B cell (primary cell): ENCODE measurements at regions of chr5 and their contacts with region 1.

Region 1: DNA sequence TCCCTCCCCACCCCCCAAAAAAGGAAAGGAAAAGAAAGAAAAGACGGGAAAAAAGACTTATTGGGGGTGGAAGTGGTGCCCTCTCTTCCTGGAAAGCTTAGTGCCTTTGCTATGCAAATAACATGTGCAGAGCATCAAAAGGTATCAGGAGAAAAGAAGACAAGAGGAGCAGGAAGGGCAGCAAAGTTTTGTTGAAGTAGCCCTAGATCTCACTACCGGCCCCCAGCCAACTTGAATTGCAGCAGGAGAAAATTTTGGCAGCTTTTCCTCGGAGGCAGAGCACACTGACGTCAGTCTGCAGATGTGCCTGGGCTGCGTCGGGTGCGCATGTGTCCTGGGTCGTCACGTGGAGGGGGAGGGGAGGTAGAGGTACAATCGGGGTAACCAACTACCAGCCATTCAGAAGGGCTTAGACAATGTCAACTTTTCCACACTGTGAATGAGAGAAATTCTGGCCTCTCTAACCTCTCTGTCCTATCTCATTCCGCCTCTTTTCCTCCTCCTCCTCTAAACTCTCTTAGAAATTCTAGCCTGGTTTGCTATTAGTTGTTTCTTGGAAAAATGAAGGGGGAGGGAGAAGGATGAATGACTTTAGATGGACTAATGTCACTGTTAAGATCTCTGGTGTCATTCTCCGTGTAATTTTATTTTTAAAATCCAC is at the start of gene ADAMTS6:
- DNase-seq: peak; percentile 85
- ATAC-seq: peak; percentile 87
- H3K4me3 ChIP-seq: peak within 1 kb of the TSS; percentile 69 to 99 (median 74)
- H3K4me3 Mint-ChIP-seq: no peak within 1 kb of the TSS
- H3K27ac ChIP-seq: peak within 1 kb of the TSS; percentile 55 to 81
- H3K27ac Mint-ChIP-seq: peak within 1 kb of the TSS; percentile 90
- H3K4me1 ChIP-seq: peaks cover 0 to 12% of the 10 kb centered on the region in 2 donors
- H3K4me1 Mint-ChIP-seq: peaks cover 7% of the 10 kb centered on the region
- H3K27me3 ChIP-seq: no peaks in the 10 kb centered on the region
- H3K27me3 Mint-ChIP-seq: no peaks in the 10 kb centered on the region
- CTCF ChIP-seq: no peak
- total RNA-seq, gene ADAMTS6: 11.9 and 12.3 TPM in 2 replicates

Region 2: DNA sequence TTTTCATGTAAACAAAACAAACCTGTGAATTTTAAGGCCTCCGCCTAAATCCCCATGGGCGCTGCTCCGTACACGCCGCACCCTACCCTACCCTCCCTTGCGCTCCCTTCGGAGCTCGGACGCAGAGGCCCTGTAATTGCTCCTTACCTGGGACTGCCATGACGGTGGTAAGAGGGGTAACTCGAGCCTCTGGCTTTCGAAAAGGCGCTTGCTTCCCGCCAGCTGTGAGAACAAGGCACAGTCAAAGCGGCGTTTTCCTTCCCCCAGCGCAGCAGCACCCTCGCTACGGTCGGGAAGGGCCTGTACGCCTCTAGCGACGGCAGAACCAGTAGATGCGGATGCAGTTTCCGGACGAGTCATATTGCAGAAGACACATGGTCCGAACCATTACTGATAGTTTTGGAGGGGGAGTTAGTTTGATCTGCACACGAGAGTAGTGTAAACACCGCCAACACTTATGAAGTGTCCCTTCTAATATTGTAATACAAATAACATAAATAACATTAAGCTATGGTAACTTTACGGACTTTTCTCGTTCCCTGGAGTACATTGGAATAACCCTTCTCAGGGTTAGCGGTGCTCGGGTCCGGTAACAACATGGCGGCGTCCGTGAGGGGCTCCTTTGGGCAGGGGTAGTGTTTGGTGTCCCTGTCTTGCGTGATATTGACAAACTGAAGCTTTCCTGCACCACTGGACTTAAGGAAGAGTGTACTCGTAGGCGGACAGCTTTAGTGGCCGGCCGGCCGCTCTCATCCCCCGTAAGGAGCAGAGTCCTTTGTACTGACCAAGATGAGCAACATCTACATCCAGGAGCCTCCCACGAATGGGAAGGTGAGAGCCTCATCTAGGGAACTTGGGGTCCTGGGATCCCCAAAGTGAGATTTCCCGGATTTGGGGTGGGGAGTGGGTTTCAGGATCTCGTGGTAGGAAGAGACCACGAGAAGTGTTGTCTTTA is 713.1 kb before region 1 on chr5 and contains the starts of genes CWC27 and SREK1IP1:
- CTCF ChIA-PET with region 1: interaction called, 5 read pairs
- POLR2A ChIA-PET with region 1: no interaction called
- intact Hi-C with region 1: loop called (anchors 2 kb)
- DNase-seq: peak; percentile 92
- ATAC-seq: peak; percentile 94
- H3K4me3 ChIP-seq: peak within 1 kb of the TSS; percentile 81 to 99 (median 96)
- H3K4me3 Mint-ChIP-seq: peak within 1 kb of the TSS; percentile 99
- H3K27ac ChIP-seq: peak within 1 kb of the TSS; percentile 73 to 84
- H3K27ac Mint-ChIP-seq: peak within 1 kb of the TSS; percentile 96
- H3K4me1 ChIP-seq: peaks cover 30 to 37% of the 10 kb centered on the region in 2 donors
- H3K4me1 Mint-ChIP-seq: peaks cover 55% of the 10 kb centered on the region
- H3K27me3 ChIP-seq: no peaks in the 10 kb centered on the region
- H3K27me3 Mint-ChIP-seq: no peaks in the 10 kb centered on the region
- CTCF ChIP-seq: no peak
- total RNA-seq, gene CWC27: 27.5 and 30.5 TPM in 2 replicates
- total RNA-seq, gene SREK1IP1: 21.0 and 25.5 TPM in 2 replicates

Region 3: GRCh38 chr5:64971513-64971912 is 510.3 kb before region 1 on chr5:
- CTCF ChIA-PET with region 1: interaction called, 160 read pairs
- POLR2A ChIA-PET with region 1: no interaction called
- intact Hi-C with region 1: no loop called
- DNase-seq: peak; percentile 28
- ATAC-seq: no peak
- H3K4me3 ChIP-seq: no peak overlapping the region
- H3K4me3 Mint-ChIP-seq: no peak overlapping the region
- H3K27ac ChIP-seq: no peak overlapping the region
- H3K27ac Mint-ChIP-seq: no peak overlapping the region
- H3K4me1 ChIP-seq: no peaks in the 10 kb centered on the region
- H3K4me1 Mint-ChIP-seq: peaks cover 1% of the 10 kb centered on the region
- H3K27me3 ChIP-seq: no peaks in the 10 kb centered on the region
- H3K27me3 Mint-ChIP-seq: no peaks in the 10 kb centered on the region
- CTCF ChIP-seq: peak; percentile 13

Region 4: GRCh38 chr5:65102828-65103711 is 378.7 kb before region 1 on chr5:
- CTCF ChIA-PET with region 1: interaction called, 36 read pairs
- POLR2A ChIA-PET with region 1: no interaction called
- intact Hi-C with region 1: loop called (anchors 1 kb)
- DNase-seq: peak; percentile 80
- ATAC-seq: peak; percentile 86
- H3K4me3 ChIP-seq: peak overlapping the region; percentile 40 to 76 (median 67)
- H3K4me3 Mint-ChIP-seq: peak overlapping the region; percentile 89
- H3K27ac ChIP-seq: peak overlapping the region; percentile 84 to 91
- H3K27ac Mint-ChIP-seq: peak overlapping the region; percentile 93
- H3K4me1 ChIP-seq: peaks cover 23% of the 10 kb centered on the region in 2 donors
- H3K4me1 Mint-ChIP-seq: peaks cover 23% of the 10 kb centered on the region
- H3K27me3 ChIP-seq: no peaks in the 10 kb centered on the region
- H3K27me3 Mint-ChIP-seq: no peaks in the 10 kb centered on the region
- CTCF ChIP-seq: no peak

Region 5: GRCh38 chr5:65506961-65507360 is 25.2 kb after region 1 on chr5:
- CTCF ChIA-PET with region 1: interaction called, 10 read pairs
- POLR2A ChIA-PET with region 1: no interaction called
- intact Hi-C with region 1: no loop called
- DNase-seq: no peak
- ATAC-seq: no peak
- H3K4me3 ChIP-seq: no peak overlapping the region
- H3K4me3 Mint-ChIP-seq: no peak overlapping the region
- H3K27ac ChIP-seq: no peak overlapping the region
- H3K27ac Mint-ChIP-seq: no peak overlapping the region
- H3K4me1 ChIP-seq: no peaks in the 10 kb centered on the region
- H3K4me1 Mint-ChIP-seq: no peaks in the 10 kb centered on the region
- H3K27me3 ChIP-seq: no peaks in the 10 kb centered on the region
- H3K27me3 Mint-ChIP-seq: no peaks in the 10 kb centered on the region
- CTCF ChIP-seq: no peak